Spleen (tissue), 13 donors: ENCODE measurements at regions of chr20 and their contacts with region 1.

Region 1: DNA sequence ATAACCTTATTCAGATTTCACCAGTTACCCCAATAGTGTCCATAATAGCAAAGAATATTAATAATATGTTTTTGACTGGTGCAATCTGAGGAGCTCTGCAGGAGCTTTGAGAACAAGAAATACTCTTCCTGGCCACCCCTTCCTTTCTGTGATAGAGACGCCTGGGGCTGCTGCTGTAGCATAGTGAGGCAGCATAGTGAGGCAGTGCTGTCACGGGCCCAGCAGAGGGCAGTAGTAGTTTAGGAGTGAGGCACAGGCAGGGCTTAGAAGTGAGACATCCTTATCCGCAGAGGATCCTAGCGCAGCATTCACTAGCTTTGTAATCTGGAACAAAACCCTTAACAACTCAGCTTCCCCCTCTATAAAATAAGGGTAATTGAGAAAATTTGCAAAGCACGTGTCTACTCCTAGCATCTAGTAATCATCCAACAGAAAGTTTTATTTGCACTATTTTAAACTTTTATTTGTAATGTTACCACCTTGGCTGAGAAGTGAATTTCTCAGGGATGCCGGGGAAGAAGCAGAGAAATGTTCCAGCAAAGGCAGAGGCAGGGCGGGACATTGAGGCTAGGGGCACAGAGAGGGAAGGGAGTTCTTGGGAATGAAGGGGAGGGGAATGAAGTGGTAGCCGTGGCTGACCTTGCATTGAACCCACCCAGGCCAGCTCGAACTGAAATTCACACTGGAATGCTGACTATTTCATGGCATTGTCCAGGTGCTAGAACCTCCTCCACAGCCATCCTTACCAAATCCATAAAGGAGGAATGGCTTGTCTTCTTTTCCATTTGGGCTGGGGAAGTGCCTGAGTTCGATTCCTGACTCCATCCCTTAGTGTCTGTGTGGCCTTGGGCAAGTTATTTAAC is 78.8 kb downstream of the CDS2 start:
- DNase-seq: peak; percentile 90
- H3K4me3 ChIP-seq: no peak overlapping the region
- H3K27ac ChIP-seq: no peak overlapping the region
- H3K4me1 ChIP-seq: peaks cover 0 to 8% (median 0%) of the 10 kb centered on the region in 6 donors
- H3K27me3 ChIP-seq: no peaks in the 10 kb centered on the region
- CTCF ChIP-seq: peak; percentile 51 to 94 (median 84)
- POLR2A ChIP-seq: no peak

Region 2: GRCh38 chr20:4912380-4913142 is 293.0 kb before region 1 on chr20:
- intact Hi-C with region 1: no loop called
- DNase-seq: no peak
- H3K4me3 ChIP-seq: no peak overlapping the region
- H3K27ac ChIP-seq: no peak overlapping the region
- H3K4me1 ChIP-seq: peaks cover 0 to 14% (median 8%) of the 10 kb centered on the region in 6 donors
- H3K27me3 ChIP-seq: no peaks in the 10 kb centered on the region
- CTCF ChIP-seq: no peak
- POLR2A ChIP-seq: no peak

Region 3: DNA sequence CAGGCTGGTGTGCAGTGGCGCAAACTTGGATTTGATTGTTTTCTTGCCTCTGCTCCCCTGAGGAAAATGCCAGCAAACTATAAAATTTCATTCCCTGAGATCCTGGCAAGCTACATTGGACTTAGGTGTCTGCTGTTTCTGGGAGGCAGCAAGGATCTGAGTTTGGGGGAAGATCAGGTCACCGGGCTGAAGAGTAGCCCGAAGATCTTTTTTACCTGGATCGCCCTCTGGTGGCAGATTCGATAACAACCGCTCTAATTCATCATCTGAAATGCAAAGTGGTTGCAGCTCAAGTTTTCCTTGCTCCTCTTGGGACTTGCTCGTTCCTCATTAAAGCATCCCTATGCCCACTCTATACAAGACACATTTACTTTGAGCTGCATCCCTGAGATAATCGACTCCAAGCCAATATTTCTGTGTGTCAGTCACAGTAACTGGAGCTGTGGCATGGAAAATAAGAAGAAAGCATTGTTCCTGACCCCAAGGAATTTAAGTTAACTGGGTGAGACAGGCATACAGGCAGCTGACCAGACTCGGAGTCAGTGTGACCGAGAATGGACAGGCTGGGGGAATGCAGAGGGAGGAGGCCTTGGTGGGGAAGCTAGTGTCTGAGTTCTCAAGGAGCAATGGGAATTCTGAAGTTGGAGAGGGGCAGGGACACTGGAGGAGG is 243.0 kb after region 1 on chr20:
- intact Hi-C with region 1: loop called (anchors 10 kb)
- DNase-seq: no peak
- H3K4me3 ChIP-seq: no peak overlapping the region
- H3K27ac ChIP-seq: no peak overlapping the region
- H3K4me1 ChIP-seq: no peaks in the 10 kb centered on the region
- H3K27me3 ChIP-seq: peaks cover 0 to 60% (median 0%) of the 10 kb centered on the region in 7 donors
- CTCF ChIP-seq: peak in 10 of 11 experiments; percentile 30 to 72 (median 56)
- POLR2A ChIP-seq: no peak